Posterior vena cava (tissue), 2 donors: ENCODE measurements at regions of chr5 and their contacts with region 1.

Region 1: GRCh38 chr5:31193591-31194467 is at the start of gene CDH6:
- DNase-seq: peak; percentile 79
- total RNA-seq, gene CDH6: 6.0 to 7.6 TPM

Region 2: GRCh38 chr5:29853711-29854211 is 1340.1 kb before region 1 on chr5:
- intact Hi-C with region 1: no loop called
- DNase-seq: no peak

Region 3: GRCh38 chr5:30540150-30540549 is 653.7 kb before region 1 on chr5:
- intact Hi-C with region 1: loop called in 1 of 2 experiments (anchors 5 kb)
- DNase-seq: no peak